A673 (cell line): ENCODE measurements at regions of chr18 and their contacts with region 1.

Region 1: GRCh38 chr18:56575819-56576663 is 62.4 kb downstream of the TXNL1 start:
- DNase-seq: peak; percentile 74
- H3K4me3 ChIP-seq: no peak overlapping the region
- H3K27ac ChIP-seq: no peak overlapping the region
- H3K4me1 ChIP-seq: peaks cover 11% of the 10 kb centered on the region
- H3K27me3 ChIP-seq: no peaks in the 10 kb centered on the region
- CTCF ChIP-seq: peak; percentile 73

Region 2: DNA sequence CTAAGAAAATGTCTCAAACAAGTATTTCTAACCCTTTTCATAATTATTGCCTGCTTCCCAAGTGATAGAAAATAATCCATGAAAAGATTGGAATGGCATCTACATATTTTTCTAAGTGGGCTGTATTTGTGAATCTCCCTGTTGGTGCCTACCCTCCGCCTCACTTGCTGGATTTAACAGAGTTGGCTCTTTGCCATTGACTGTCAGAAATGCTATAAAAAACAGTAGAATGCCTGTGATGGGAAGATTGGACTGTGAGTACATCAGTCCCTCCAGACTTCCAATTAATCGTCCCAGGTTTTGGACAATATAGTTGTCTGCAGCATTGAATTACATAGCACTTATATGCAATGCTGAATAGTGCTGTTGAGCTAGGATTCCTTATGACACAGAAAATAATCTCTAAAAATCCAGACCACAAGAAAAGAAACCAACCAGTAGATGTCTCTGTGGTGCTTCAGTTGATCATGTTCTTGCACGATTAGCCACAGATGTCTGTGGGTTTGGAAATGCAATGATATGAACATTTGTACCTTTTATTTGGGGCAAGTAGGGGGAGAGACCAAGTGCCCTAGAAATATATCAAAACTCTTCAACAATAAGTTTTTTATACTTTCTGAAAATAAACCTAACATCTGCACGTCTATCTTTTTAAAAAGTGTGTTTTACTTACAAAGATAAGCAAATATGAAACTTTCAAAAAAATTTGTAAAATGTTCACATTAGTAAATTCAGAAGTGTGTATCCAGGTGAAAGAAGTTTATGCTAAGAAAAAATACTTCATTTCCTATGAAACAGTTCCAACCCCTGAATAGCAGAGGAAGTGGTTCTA is 1896.5 kb before region 1 on chr18:
- CTCF ChIA-PET with region 1: no interaction called
- POLR2A ChIA-PET with region 1: no interaction called
- intact Hi-C with region 1: loop called (anchors 5 kb)
- DNase-seq: peak; percentile 74
- H3K4me3 ChIP-seq: no peak overlapping the region
- H3K27ac ChIP-seq: no peak overlapping the region
- H3K4me1 ChIP-seq: no peaks in the 10 kb centered on the region
- H3K27me3 ChIP-seq: no peaks in the 10 kb centered on the region
- CTCF ChIP-seq: peak; percentile 63

Region 3: GRCh38 chr18:55012008-55012407 is 1564.0 kb before region 1 on chr18:
- CTCF ChIA-PET with region 1: interaction called, 14 read pairs
- POLR2A ChIA-PET with region 1: no interaction called
- intact Hi-C with region 1: no loop called
- DNase-seq: no peak
- H3K4me3 ChIP-seq: no peak overlapping the region
- H3K27ac ChIP-seq: no peak overlapping the region
- H3K4me1 ChIP-seq: no peaks in the 10 kb centered on the region
- H3K27me3 ChIP-seq: peaks cover under 1% of the 10 kb centered on the region
- CTCF ChIP-seq: no peak

Region 4: DNA sequence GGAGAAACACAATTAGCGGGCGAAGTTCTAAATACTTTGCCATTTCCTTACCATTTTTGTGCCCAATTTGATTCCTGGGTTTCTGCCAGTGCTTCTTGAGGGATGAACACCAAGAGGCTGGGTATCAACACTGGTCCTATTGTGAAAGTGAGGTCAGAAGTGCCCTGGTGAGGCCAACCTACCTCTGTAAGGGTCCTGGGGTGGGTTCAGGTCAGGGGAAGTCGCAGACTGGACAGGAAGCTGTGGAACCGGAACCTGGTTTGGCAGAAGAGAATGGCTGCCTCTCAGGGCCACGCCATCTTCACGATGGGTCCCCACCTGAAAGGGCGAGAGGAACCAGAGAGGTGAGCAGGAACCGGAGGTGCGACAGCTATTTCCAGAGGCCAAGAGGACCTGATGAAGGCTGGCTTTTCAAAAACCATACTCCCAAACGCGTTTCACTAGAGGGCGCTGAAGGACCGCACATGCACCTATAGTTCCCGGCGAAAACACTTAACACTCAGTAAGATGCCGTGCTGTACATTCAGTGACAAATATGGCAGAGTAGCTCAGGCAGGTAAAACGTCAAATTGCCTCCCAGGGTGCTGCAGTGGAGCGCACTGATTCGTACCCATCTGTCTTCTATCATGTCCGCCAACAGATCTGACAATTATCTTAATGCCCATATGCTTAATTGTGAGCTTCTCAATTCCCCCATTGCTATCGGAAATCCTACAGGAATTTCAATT is 1341.5 kb before region 1 on chr18:
- CTCF ChIA-PET with region 1: interaction called, 3 read pairs
- POLR2A ChIA-PET with region 1: no interaction called
- intact Hi-C with region 1: loop called (anchors 2 kb)
- DNase-seq: peak; percentile 91
- H3K4me3 ChIP-seq: peak overlapping the region; percentile 3
- H3K27ac ChIP-seq: peak overlapping the region; percentile 19
- H3K4me1 ChIP-seq: peaks cover 32% of the 10 kb centered on the region
- H3K27me3 ChIP-seq: no peaks in the 10 kb centered on the region
- CTCF ChIP-seq: peak; percentile 83

Region 5: GRCh38 chr18:56593906-56594305 is 17.9 kb after region 1 on chr18:
- CTCF ChIA-PET with region 1: no interaction called
- POLR2A ChIA-PET with region 1: no interaction called
- intact Hi-C with region 1: no loop called
- DNase-seq: no peak
- H3K4me3 ChIP-seq: no peak overlapping the region
- H3K27ac ChIP-seq: no peak overlapping the region
- H3K4me1 ChIP-seq: no peaks in the 10 kb centered on the region
- H3K27me3 ChIP-seq: no peaks in the 10 kb centered on the region
- CTCF ChIP-seq: no peak